ENCODE measurements at regions of chr19 and their contacts with region 1.

Region 1: DNA sequence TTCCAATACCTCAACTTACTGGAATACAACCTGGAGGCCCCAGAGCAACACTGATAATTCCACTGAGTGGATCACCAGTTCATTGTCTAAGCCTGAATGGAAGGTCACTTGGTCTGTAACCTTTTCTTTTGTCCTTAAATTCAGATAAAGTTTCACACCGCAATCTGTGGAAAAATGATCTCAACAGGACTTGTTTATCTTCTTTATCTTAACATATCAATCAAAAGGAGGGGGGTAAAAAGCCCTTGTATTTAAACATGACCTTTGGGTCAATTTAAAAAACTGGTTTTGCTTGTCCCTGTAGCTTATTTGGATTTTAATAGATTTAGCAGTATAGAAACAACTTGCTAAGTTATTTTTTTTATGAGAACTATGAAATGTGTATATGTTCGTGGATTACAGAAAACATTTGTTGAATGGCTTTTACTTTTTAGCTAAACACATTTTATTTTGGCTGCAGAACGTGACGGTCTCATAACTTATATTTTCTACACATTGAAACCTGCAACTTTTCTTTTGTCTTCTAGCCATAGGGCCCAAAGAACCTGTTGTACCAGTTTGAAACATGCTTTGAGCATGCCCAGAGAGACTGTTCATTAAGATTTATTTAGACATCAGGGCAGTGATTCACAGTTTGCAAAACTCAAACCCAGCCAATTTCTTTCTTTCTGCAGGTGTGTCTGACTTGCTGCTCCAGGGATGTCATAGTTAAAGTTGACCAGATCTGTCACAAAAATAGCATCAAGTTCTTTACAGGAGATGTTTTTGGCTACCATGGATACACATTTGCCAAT is 21.8 kb downstream of the SAE1 start:
- DNase-seq: no peak
- ATAC-seq: no peak

Region 2: GRCh38 chr19:47428177-47428894 is 275.9 kb after region 1 on chr19:
- intact Hi-C with region 1: loop called (anchors 2 kb)
- DNase-seq: peak; percentile 87
- ATAC-seq: peak; percentile 88